Activated B cell treated with CpG ODN at 0.5 μM for 24 hours (primary cell): ENCODE measurements at regions of chr22 and their contacts with region 1.

Region 1: DNA sequence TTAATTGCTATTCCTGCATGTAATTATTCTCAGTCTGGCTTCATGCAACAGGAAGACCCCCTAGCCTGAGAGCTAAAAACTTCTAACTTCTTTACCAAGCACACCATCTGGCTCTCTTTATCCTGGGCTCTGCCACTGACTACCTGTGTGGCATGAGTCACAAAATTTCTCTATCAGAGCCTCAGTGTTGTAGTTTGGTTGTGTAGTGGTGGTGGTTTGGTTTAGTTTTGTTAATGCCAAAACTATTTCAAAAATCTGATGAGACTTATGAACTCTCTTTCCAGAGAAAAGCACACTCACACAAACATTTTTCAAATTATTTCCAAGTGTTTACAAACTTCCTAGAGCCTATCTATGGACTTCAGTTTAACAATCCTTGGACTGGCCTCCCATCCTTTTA is 7.5 kb upstream of the IL17RA start:
- DNase-seq: no peak
- ATAC-seq: no peak
- H3K4me3 Mint-ChIP-seq: no peak overlapping the region
- H3K27ac Mint-ChIP-seq: no peak overlapping the region
- H3K4me1 Mint-ChIP-seq: peaks cover 3% of the 10 kb centered on the region
- H3K27me3 Mint-ChIP-seq: no peaks in the 10 kb centered on the region
- CTCF ChIP-seq: no peak

Region 2: GRCh38 chr22:17095538-17095937 is 18.3 kb after region 1 on chr22:
- CTCF ChIA-PET with region 1: no interaction called
- POLR2A ChIA-PET with region 1: no interaction called
- intact Hi-C with region 1: loop called (anchors 2 kb)
- DNase-seq: no peak
- ATAC-seq: no peak
- H3K4me3 Mint-ChIP-seq: no peak overlapping the region
- H3K27ac Mint-ChIP-seq: no peak overlapping the region
- H3K4me1 Mint-ChIP-seq: peaks cover 38% of the 10 kb centered on the region
- H3K27me3 Mint-ChIP-seq: no peaks in the 10 kb centered on the region
- CTCF ChIP-seq: no peak

Region 3: GRCh38 chr22:17106785-17107546 is 29.7 kb after region 1 on chr22:
- CTCF ChIA-PET with region 1: no interaction called
- POLR2A ChIA-PET with region 1: no interaction called
- intact Hi-C with region 1: no loop called
- DNase-seq: no peak
- ATAC-seq: no peak
- H3K4me3 Mint-ChIP-seq: peak overlapping the region; percentile 24
- H3K27ac Mint-ChIP-seq: peak overlapping the region; percentile 46
- H3K4me1 Mint-ChIP-seq: peaks cover 9% of the 10 kb centered on the region
- H3K27me3 Mint-ChIP-seq: no peaks in the 10 kb centered on the region
- CTCF ChIP-seq: no peak

Region 4: DNA sequence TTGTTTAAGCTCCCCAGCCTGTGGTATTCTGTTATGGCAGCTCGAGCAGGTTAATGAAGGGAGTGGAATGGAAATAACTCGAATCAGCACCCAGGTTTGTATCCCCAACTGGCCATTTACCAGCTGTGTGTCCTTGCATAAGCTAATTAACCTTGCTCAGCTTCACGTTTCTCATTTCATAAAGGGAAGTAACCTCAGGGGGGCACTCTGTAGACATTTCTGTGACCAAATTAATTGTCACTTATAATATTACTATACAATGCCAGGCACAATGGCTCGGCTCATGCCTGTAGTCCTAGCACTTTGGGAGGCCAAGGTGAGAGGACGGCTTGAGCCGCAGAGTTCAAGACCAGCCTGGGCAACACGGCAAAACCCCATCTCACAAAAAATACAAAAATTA is 128.2 kb after region 1 on chr22:
- CTCF ChIA-PET with region 1: interaction called, 13 read pairs
- POLR2A ChIA-PET with region 1: no interaction called
- intact Hi-C with region 1: no loop called
- DNase-seq: no peak
- ATAC-seq: peak; percentile 66
- H3K4me3 Mint-ChIP-seq: no peak overlapping the region
- H3K27ac Mint-ChIP-seq: peak overlapping the region; percentile 56
- H3K4me1 Mint-ChIP-seq: no peaks in the 10 kb centered on the region
- H3K27me3 Mint-ChIP-seq: no peaks in the 10 kb centered on the region
- CTCF ChIP-seq: no peak